Activated CD4-positive, alpha-beta memory T cell treated with anti-CD3 and anti-CD28 coated beads for 36 hours (primary cell): ENCODE measurements at regions of chr19 and their contacts with region 1.

Region 1: GRCh38 chr19:5719961-5720790 is at the starts of genes CATSPERD and LONP1:
- DNase-seq: peak; percentile 99
- H3K4me3 Mint-ChIP-seq: peak within 1 kb of the TSS; percentile 95
- H3K27ac Mint-ChIP-seq: peak within 1 kb of the TSS; percentile 99
- H3K4me1 Mint-ChIP-seq: peaks cover 30% of the 10 kb centered on the region
- H3K27me3 Mint-ChIP-seq: no peaks in the 10 kb centered on the region
- total RNA-seq, gene CATSPERD: not detected
- total RNA-seq, gene LONP1: 178 to 181 TPM

Region 2: GRCh38 chr19:5622463-5623396 is 97.4 kb before region 1 on chr19 and contains the starts of genes SAFB and SAFB2:
- CTCF ChIA-PET with region 1: interaction called, 4 read pairs
- POLR2A ChIA-PET with region 1: interaction called, 15 read pairs
- intact Hi-C with region 1: loop called (anchors 1 kb)
- DNase-seq: peak; percentile 100
- H3K4me3 Mint-ChIP-seq: peak within 1 kb of the TSS; percentile 100
- H3K27ac Mint-ChIP-seq: peak within 1 kb of the TSS; percentile 100
- H3K4me1 Mint-ChIP-seq: peaks cover 67% of the 10 kb centered on the region
- H3K27me3 Mint-ChIP-seq: peaks cover 3% of the 10 kb centered on the region
- total RNA-seq, gene SAFB: 103 to 113 TPM
- total RNA-seq, gene SAFB2: 63.5 to 76.4 TPM

Region 3: GRCh38 chr19:5680437-5681368 is 39.5 kb before region 1 on chr19 and contains the starts of genes HSD11B1L and MICOS13:
- CTCF ChIA-PET with region 1: no interaction called
- POLR2A ChIA-PET with region 1: no interaction called
- intact Hi-C with region 1: loop called (anchors 2 kb)
- DNase-seq: peak; percentile 99
- H3K4me3 Mint-ChIP-seq: peak within 1 kb of the TSS; percentile 96
- H3K27ac Mint-ChIP-seq: peak within 1 kb of the TSS; percentile 89
- H3K4me1 Mint-ChIP-seq: peaks cover 17% of the 10 kb centered on the region
- H3K27me3 Mint-ChIP-seq: no peaks in the 10 kb centered on the region
- total RNA-seq, gene HSD11B1L: 3.8 to 4.1 TPM
- total RNA-seq, gene MICOS13: 50.9 to 55.3 TPM

Region 4: GRCh38 chr19:5690125-5690954 is 29.8 kb before region 1 on chr19 and contains the start of gene RPL36:
- CTCF ChIA-PET with region 1: interaction called, 103 read pairs
- POLR2A ChIA-PET with region 1: interaction called, 70 read pairs
- intact Hi-C with region 1: loop called (anchors 1 kb)
- DNase-seq: peak; percentile 99
- H3K4me3 Mint-ChIP-seq: peak within 1 kb of the TSS; percentile 96
- H3K27ac Mint-ChIP-seq: peak within 1 kb of the TSS; percentile 95
- H3K4me1 Mint-ChIP-seq: peaks cover 31% of the 10 kb centered on the region
- H3K27me3 Mint-ChIP-seq: no peaks in the 10 kb centered on the region
- total RNA-seq, gene RPL36: 1,487 to 1,524 TPM

Region 5: DNA sequence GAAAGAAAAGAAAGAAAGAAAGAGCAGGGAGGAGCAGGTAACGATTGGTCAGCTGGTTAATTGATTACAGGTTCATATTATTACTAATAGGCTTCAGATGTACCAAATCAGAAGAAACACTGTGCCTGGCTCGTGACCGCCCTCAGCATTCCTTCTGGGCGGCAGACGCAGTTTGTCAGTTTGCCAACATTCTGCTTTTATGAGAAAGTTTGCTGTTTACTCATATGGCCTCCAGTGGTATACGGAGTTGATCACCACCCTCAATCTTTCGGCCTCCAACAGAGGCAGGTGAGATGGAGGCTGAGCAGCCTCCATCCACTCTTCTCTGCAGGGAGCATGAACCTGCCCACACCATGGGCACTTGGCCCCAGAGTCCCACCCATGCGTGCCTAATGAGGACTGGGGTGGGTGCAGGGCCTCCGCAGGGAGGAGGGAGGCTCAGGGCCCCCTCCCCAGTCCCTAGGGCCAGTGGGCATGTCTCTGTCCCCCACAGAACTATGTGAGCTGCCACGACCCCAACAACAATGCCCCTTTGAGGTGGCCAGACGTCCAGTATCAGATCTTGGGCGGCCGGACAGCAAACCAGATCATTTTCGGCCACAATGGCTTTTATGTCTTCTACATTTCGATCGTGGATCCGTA is 55.6 kb after region 1 on chr19:
- CTCF ChIA-PET with region 1: no interaction called
- POLR2A ChIA-PET with region 1: no interaction called
- intact Hi-C with region 1: no loop called
- DNase-seq: no peak
- H3K4me3 Mint-ChIP-seq: no peak overlapping the region
- H3K27ac Mint-ChIP-seq: no peak overlapping the region
- H3K4me1 Mint-ChIP-seq: no peaks in the 10 kb centered on the region
- H3K27me3 Mint-ChIP-seq: no peaks in the 10 kb centered on the region

Region 6: DNA sequence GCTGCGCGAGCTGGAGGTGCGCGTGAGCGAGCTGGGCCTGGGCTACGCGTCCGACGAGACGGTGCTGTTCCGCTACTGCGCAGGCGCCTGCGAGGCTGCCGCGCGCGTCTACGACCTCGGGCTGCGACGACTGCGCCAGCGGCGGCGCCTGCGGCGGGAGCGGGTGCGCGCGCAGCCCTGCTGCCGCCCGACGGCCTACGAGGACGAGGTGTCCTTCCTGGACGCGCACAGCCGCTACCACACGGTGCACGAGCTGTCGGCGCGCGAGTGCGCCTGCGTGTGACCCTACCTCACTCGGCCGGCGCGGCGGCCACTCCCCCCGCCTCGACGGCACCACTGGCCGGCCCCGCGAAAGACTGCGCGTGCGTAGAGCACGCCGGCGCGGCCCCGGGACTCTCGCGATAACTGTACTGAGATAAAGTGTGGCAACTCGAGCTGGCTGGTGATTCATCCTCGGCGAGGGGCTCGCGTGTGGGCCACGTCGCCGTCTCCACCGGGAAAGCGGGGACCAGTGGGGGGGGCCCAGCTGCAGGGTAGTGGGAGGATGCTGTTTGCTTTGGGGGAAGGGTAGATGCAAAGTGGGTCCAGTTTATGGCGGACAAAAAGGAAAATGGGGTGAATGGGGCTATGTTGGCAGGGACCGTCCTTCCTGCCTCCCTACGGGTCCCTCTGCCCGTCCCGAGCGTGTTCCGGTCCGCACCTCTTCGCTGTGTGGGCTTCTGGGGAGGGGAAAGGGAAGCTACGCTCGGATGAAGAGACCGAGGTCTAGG is 107.9 kb after region 1 on chr19:
- CTCF ChIA-PET with region 1: no interaction called
- POLR2A ChIA-PET with region 1: interaction called, 7 read pairs
- intact Hi-C with region 1: loop called (anchors 1 kb)
- DNase-seq: peak; percentile 97
- H3K4me3 Mint-ChIP-seq: peak overlapping the region; percentile 98
- H3K27ac Mint-ChIP-seq: peak overlapping the region; percentile 97
- H3K4me1 Mint-ChIP-seq: peaks cover 4% of the 10 kb centered on the region
- H3K27me3 Mint-ChIP-seq: no peaks in the 10 kb centered on the region

Region 7: GRCh38 chr19:5953680-5954213 is 233.6 kb after region 1 on chr19:
- CTCF ChIA-PET with region 1: no interaction called
- POLR2A ChIA-PET with region 1: no interaction called
- intact Hi-C with region 1: loop called (anchors 1 kb)
- DNase-seq: peak; percentile 64
- H3K4me3 Mint-ChIP-seq: peak overlapping the region; percentile 64
- H3K27ac Mint-ChIP-seq: peak overlapping the region; percentile 95
- H3K4me1 Mint-ChIP-seq: peaks cover 91% of the 10 kb centered on the region
- H3K27me3 Mint-ChIP-seq: no peaks in the 10 kb centered on the region

Region 8: DNA sequence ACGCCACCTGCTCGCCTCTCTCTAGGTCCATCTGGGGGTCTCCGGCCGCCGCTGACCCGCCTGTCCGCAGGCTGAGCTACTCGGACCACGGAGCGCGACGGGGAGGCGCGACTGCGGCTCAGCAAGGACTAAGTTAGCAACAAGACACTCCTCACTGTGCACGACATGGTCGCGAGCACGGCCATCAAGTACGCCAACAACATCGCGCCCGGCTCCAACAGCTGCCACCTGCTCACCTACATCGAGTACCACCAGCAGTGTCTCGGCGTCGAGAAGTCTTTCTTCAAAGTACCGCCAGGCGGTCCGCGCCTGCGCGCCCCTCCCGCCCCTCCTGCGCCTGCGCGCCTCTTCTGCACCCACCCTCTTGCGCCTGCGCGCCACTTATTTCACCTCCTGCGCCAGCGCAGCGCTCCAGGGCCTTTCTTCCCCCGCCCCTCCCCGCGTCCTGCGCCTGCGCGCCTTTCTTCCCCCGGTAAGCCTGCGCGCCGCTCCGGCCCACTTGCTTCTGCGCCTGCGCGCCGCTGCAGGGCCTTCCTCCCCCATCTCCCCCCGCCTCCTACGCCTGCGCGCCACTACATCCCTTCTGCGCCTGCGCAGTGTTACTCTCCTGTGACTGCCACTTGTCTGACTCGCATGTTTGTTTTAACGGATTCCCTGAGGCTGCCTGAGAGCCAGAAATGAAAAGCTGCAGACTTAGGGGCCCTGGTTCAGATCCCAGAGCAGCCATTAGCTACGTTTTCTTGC is 479.2 kb after region 1 on chr19:
- CTCF ChIA-PET with region 1: no interaction called
- POLR2A ChIA-PET with region 1: no interaction called
- intact Hi-C with region 1: loop called (anchors 1 kb)
- DNase-seq: peak; percentile 100
- H3K4me3 Mint-ChIP-seq: peak overlapping the region; percentile 98
- H3K27ac Mint-ChIP-seq: peak overlapping the region; percentile 84
- H3K4me1 Mint-ChIP-seq: peaks cover 13% of the 10 kb centered on the region
- H3K27me3 Mint-ChIP-seq: peaks cover 1% of the 10 kb centered on the region